Activated CD4-positive, alpha-beta memory T cell treated with anti-CD3 and anti-CD28 coated beads for 36 hours (primary cell): ENCODE measurements at regions of chr20 and their contacts with region 1.

Region 1: GRCh38 chr20:46512943-46513844 is at the start of gene ZNF334:
- DNase-seq: peak; percentile 74
- H3K4me3 Mint-ChIP-seq: peak within 1 kb of the TSS; percentile 71
- H3K27ac Mint-ChIP-seq: no peak within 1 kb of the TSS
- H3K4me1 Mint-ChIP-seq: peaks cover 28% of the 10 kb centered on the region
- H3K27me3 Mint-ChIP-seq: peaks cover 37% of the 10 kb centered on the region
- total RNA-seq, gene ZNF334: 1.1 to 2.2 TPM

Region 2: DNA sequence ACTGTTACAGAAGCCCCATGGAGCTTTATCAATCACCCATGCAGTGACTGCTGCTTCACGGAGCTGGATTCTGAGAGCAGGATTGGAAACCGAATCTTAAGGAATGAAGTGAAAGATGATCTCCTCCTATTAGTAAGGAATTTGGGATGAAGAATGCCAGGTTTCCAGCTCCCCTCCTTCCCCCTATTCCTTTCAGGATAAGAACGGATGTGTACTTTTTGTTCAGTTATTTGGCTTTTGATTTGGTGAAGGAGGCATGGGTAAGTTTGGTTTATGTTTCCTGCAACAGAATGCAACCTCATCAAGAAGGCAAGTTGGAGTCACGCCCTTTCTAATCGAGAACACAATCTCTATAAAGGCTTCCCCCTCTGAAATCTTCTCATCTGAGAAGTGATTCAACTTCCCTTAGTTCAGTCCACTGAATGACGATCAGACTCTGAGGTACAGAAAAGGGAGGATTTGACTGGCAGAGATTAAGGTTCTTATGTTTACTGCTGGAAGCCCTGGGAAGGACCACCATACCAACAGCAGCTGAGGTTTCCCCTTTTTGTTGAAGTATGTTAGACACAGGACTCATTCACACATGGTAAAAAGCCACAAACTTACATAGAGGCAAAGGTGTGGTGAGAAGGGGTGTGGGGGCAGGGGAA is 112.2 kb before region 1 on chr20:
- CTCF ChIA-PET with region 1: interaction called, 3 read pairs
- POLR2A ChIA-PET with region 1: no interaction called
- intact Hi-C with region 1: loop called (anchors 2 kb)
- DNase-seq: peak; percentile 48
- H3K4me3 Mint-ChIP-seq: peak overlapping the region; percentile 54
- H3K27ac Mint-ChIP-seq: peak overlapping the region; percentile 85
- H3K4me1 Mint-ChIP-seq: peaks cover 65% of the 10 kb centered on the region
- H3K27me3 Mint-ChIP-seq: no peaks in the 10 kb centered on the region

Region 3: DNA sequence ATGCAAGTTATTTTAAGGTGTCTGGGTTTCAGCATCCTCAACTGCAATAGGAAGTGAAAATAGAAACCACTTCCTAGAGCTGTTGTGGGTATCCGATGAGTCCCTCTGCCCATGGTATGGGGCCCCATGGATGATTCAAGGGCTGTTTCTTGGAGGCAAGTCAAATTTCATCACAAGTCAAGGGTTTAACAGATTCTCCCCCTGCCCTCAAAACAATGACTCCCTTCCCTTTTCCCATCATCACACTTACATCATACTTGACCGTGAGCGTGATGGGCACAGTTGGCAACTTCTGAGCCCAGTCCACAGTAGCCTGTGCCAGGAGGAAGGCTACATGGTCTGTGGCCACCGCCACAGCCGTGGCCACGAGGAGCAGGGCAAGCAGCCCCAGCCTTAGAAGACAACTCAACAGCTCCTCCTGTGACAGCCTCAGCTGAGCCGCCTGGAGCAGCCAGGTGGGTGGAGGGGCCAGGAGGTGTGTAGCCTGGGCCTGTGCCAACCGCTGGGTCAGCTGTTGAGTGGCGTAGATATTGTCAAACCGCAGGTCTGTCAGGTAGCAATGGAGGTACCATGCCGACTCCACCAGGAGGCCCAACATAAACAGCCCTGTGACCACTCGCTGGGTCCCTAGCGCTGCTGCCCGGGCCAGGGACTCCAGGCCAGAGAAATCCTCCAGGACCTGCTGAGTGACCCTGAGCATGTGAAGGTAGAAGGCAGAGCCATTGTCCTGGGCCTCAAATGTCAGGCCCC is 32.1 kb after region 1 on chr20:
- CTCF ChIA-PET with region 1: interaction called, 3 read pairs
- POLR2A ChIA-PET with region 1: no interaction called
- intact Hi-C with region 1: loop called (anchors 1 kb)
- DNase-seq: peak; percentile 80
- H3K4me3 Mint-ChIP-seq: peak overlapping the region; percentile 31
- H3K27ac Mint-ChIP-seq: peak overlapping the region; percentile 88
- H3K4me1 Mint-ChIP-seq: peaks cover 15% of the 10 kb centered on the region
- H3K27me3 Mint-ChIP-seq: peaks cover 4% of the 10 kb centered on the region

Region 4: DNA sequence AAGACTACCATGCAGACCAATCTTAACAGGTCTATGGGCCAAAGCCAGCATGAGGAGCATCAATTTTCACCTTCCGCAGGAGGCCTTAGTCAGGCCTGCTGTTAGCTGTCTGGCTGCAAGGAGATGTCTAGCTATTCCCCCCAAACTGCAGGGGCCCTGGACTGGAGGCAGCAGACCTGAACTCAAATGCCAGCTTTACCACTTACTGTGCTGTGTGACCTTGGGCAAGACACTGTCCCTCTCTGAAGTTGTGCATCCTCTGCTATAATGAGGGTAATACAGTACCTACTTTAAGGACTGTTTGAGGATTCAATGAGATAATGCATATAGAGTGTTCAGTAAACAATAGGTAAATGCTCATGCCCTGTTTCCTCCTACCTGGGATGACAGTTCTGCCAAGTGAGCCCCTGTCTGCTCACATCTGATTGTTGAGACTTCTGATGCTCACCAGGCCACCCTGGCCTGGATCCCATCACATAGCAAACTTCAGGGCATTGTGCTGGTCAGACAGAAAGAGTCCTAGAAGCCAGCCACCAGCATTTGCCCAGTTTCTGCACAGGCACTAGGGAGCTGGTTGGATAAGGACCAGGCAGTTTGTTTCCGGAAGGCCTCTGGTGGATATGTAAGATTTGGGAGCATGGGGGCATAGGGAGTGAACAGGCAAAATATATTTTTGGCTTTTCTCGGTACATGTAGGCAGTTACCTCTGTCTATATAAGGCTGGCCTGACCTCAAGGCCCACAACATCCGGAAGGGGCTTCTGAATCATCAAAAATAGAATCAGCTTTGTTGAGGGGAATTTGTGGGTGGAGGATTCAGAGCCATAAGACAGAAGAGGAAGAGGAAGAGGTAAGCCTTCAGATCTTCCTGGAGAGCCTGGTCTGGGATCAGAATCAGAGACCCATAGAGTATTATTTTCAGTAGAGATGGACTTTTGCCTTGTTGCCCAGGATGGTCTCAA is 39.5 kb after region 1 on chr20:
- CTCF ChIA-PET with region 1: no interaction called
- POLR2A ChIA-PET with region 1: interaction called, 3 read pairs
- intact Hi-C with region 1: loop called (anchors 2 kb)
- DNase-seq: peak; percentile 80
- H3K4me3 Mint-ChIP-seq: peak overlapping the region; percentile 16
- H3K27ac Mint-ChIP-seq: peak overlapping the region; percentile 84
- H3K4me1 Mint-ChIP-seq: peaks cover 36% of the 10 kb centered on the region
- H3K27me3 Mint-ChIP-seq: peaks cover 1% of the 10 kb centered on the region

Region 5: GRCh38 chr20:46592580-46593362 is 79.6 kb after region 1 on chr20:
- CTCF ChIA-PET with region 1: no interaction called
- POLR2A ChIA-PET with region 1: no interaction called
- intact Hi-C with region 1: no loop called
- DNase-seq: peak; percentile 24
- H3K4me3 Mint-ChIP-seq: no peak overlapping the region
- H3K27ac Mint-ChIP-seq: no peak overlapping the region
- H3K4me1 Mint-ChIP-seq: peaks cover 2% of the 10 kb centered on the region
- H3K27me3 Mint-ChIP-seq: peaks cover 8% of the 10 kb centered on the region

Region 6: GRCh38 chr20:46689082-46689754 is 176.0 kb after region 1 on chr20 and contains the start of gene TP53RK:
- CTCF ChIA-PET with region 1: interaction called, 3 read pairs
- POLR2A ChIA-PET with region 1: no interaction called
- intact Hi-C with region 1: loop called (anchors 2 kb)
- DNase-seq: peak; percentile 98
- H3K4me3 Mint-ChIP-seq: peak within 1 kb of the TSS; percentile 96
- H3K27ac Mint-ChIP-seq: peak within 1 kb of the TSS; percentile 97
- H3K4me1 Mint-ChIP-seq: peaks cover 36% of the 10 kb centered on the region
- H3K27me3 Mint-ChIP-seq: no peaks in the 10 kb centered on the region
- total RNA-seq, gene TP53RK: 12.1 to 12.3 TPM